CD8-positive, alpha-beta T cell (primary cell): ENCODE measurements at regions of chr21 and their contacts with region 1.

Region 1: DNA sequence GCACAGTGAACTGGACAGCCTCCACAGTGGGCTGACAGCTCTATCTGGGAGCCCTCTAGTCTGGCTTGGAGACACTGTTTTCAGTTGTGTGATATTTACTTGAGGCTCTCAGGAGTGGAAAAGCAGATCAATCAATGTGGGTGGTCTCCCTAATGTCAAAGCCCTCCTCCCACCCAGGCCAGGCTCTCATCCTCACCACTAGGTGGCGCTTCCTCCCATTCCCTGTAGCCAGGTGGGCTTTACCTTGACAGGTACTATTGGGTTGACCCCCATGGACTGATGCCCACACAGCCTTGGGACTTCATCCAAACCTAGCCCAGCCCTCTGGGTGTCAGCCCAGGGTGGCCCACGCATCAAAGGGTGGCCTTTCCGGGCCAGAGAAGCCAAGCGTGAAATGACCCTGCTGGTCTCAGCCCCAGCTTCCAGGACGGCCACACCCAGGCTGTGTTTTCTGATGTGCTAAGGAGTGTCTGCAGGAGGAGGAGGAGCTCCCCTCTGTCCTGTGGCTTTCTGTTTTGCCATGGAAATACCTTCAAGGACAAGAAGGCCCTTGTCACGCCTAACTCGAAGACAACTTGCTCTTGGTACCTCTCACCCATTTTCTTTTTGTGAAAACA is 54.0 kb downstream of the CLIC6 start:
- DNase-seq: peak in 7 of 9 experiments; percentile 9 to 60 (median 39)
- ATAC-seq: no peak
- H3K4me3 ChIP-seq: no peak overlapping the region
- H3K4me3 Mint-ChIP-seq: no peak overlapping the region
- H3K27ac ChIP-seq: no peak overlapping the region
- H3K27ac Mint-ChIP-seq: no peak overlapping the region
- H3K4me1 ChIP-seq: no peaks in the 10 kb centered on the region
- H3K4me1 Mint-ChIP-seq: no peaks in the 10 kb centered on the region
- H3K27me3 ChIP-seq: peaks cover 0 to 2% of the 10 kb centered on the region in 2 experiments
- H3K27me3 Mint-ChIP-seq: peaks cover 16% of the 10 kb centered on the region
- CTCF ChIP-seq: peak; percentile 81

Region 2: GRCh38 chr21:34707876-34708325 is 14.9 kb before region 1 on chr21:
- CTCF ChIA-PET with region 1: interaction called, 20 read pairs
- POLR2A ChIA-PET with region 1: no interaction called
- intact Hi-C with region 1: no loop called
- DNase-seq: peak in 8 of 9 experiments; percentile 7 to 60 (median 19)
- ATAC-seq: peak; percentile 65
- H3K4me3 ChIP-seq: peak overlapping the region in 1 of 2 experiments; percentile 19
- H3K4me3 Mint-ChIP-seq: peak overlapping the region; percentile 54
- H3K27ac ChIP-seq: no peak overlapping the region
- H3K27ac Mint-ChIP-seq: peak overlapping the region; percentile 71
- H3K4me1 ChIP-seq: peaks cover 21% of the 10 kb centered on the region
- H3K4me1 Mint-ChIP-seq: peaks cover 26% of the 10 kb centered on the region
- H3K27me3 ChIP-seq: no peaks in the 10 kb centered on the region
- H3K27me3 Mint-ChIP-seq: peaks cover 2% of the 10 kb centered on the region
- CTCF ChIP-seq: no peak

Region 3: DNA sequence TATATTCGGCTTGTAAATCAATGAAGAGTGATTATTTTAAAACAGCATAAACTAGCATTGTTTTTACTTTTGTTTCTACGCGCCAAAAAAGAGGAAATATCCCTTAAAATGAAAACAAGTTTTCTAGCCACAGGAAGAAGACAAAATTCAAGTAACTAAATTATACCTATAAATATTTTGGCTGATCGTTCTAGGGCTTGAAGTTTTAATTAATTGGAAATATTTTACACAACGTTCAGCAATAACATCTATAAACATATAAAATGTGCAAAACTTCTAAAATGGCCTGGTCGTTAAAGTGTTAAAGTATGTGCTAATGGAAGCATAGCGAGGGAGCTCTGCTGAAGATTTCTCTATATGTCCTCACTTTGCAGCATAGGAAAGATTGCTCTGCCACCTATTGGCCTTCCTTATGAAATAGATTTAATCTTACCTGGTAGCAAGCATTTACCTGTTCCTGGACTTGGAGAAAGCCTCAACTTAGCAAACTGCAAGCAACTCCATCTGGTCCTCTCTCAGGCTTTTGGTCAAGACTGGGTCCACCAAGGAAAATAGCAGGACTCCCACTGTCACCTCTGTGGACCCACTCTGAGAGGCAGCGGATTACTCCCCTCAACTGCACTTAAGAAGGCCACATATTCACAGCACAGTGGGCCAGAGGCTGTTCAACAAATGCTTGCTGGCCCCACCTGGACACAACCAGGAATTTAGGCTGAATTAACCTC is 677.6 kb after region 1 on chr21:
- CTCF ChIA-PET with region 1: interaction called, 19 read pairs
- POLR2A ChIA-PET with region 1: no interaction called
- intact Hi-C with region 1: loop called in 1 of 2 experiments (anchors 1 kb)
- DNase-seq: peak in 8 of 9 experiments; percentile 2 to 81 (median 34)
- ATAC-seq: peak; percentile 89
- H3K4me3 ChIP-seq: no peak overlapping the region
- H3K4me3 Mint-ChIP-seq: no peak overlapping the region
- H3K27ac ChIP-seq: no peak overlapping the region
- H3K27ac Mint-ChIP-seq: no peak overlapping the region
- H3K4me1 ChIP-seq: no peaks in the 10 kb centered on the region
- H3K4me1 Mint-ChIP-seq: no peaks in the 10 kb centered on the region
- H3K27me3 ChIP-seq: no peaks in the 10 kb centered on the region
- H3K27me3 Mint-ChIP-seq: no peaks in the 10 kb centered on the region
- CTCF ChIP-seq: peak; percentile 67

Region 4: GRCh38 chr21:36028127-36029069 is 1305.6 kb after region 1 on chr21:
- CTCF ChIA-PET with region 1: interaction called, 5 read pairs
- POLR2A ChIA-PET with region 1: no interaction called
- intact Hi-C with region 1: loop called in 1 of 2 experiments (anchors 1 kb)
- DNase-seq: peak; percentile 23 to 82 (median 66)
- ATAC-seq: peak; percentile 84
- H3K4me3 ChIP-seq: no peak overlapping the region
- H3K4me3 Mint-ChIP-seq: no peak overlapping the region
- H3K27ac ChIP-seq: no peak overlapping the region
- H3K27ac Mint-ChIP-seq: no peak overlapping the region
- H3K4me1 ChIP-seq: peaks cover 4% of the 10 kb centered on the region
- H3K4me1 Mint-ChIP-seq: peaks cover 2% of the 10 kb centered on the region
- H3K27me3 ChIP-seq: no peaks in the 10 kb centered on the region
- H3K27me3 Mint-ChIP-seq: no peaks in the 10 kb centered on the region
- CTCF ChIP-seq: peak; percentile 97